Mammary epithelial cell (primary cell): ENCODE measurements at regions of chr7 and their contacts with region 1.

Region 1: DNA sequence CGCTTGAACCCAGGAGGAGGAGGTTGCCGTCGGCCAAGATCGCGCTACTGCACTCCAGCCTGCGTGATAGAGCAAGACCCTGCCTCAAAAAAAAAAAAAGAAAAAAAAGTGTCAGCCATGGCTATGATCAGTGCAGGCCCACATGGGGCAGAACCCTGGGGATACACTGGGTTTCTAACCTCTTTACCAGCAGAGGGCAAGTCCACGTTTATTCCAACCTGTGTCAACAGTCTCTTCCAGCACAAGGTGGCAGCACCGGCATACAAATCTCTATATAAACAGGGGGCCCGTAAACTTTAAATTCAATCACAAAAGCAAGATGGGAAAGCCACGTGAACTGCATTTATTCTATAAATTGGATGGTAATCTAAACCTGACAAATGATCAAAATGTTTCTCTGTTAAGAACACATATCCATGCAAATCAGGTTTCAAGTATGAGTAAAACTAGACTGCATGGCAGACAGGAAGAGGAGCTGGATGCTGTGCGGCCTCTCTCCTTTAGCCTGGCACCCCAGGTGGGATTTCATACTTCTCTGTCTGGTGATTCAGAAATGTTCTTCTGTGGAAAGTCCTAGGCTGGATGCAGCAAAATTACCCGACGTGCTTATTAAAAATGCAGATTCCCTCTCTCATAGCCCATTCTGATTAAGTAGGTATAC is 60.0 kb upstream of the STEAP1B start:
- DNase-seq: peak; percentile 61
- H3K4me3 ChIP-seq: no peak overlapping the region
- H3K27ac ChIP-seq: no peak overlapping the region
- H3K4me1 ChIP-seq: peaks cover 45% of the 10 kb centered on the region
- H3K27me3 ChIP-seq: no peaks in the 10 kb centered on the region
- CTCF ChIP-seq: peak; percentile 93

Region 2: DNA sequence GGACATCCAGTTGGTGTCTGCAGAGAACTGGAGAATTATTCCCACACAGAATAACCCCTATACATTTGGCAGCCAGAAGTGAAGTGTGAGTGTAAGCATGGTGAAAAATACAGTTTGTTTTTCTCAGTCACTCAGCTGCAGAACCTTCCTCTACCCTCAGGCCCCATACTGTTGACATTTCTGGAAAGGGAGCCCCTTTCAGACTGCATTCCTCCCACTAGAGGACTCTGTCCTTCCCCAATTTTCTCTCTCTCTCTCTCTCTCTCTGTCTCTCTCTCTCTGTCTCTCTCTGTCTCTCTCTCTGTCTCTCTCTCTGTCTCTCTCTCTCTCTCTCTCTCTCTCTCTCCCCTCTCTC is 26.8 kb after region 1 on chr7:
- CTCF ChIA-PET with region 1: no interaction called
- dilution Hi-C with region 1: no loop called
- in situ Hi-C with region 1: no loop called
- intact Hi-C with region 1: loop called (anchors 2 kb)
- DNase-seq: peak; percentile 34
- H3K4me3 ChIP-seq: no peak overlapping the region
- H3K27ac ChIP-seq: no peak overlapping the region
- H3K4me1 ChIP-seq: peaks cover 33% of the 10 kb centered on the region
- H3K27me3 ChIP-seq: no peaks in the 10 kb centered on the region
- CTCF ChIP-seq: peak; percentile 32 to 59

Region 3: GRCh38 chr7:22660732-22661131 is 100.8 kb after region 1 on chr7:
- CTCF ChIA-PET with region 1: no interaction called
- dilution Hi-C with region 1: no loop called
- in situ Hi-C with region 1: no loop called
- intact Hi-C with region 1: loop called (anchors 2 kb)
- DNase-seq: no peak
- H3K4me3 ChIP-seq: no peak overlapping the region
- H3K27ac ChIP-seq: no peak overlapping the region
- H3K4me1 ChIP-seq: peaks cover 1% of the 10 kb centered on the region
- H3K27me3 ChIP-seq: no peaks in the 10 kb centered on the region
- CTCF ChIP-seq: peak in 1 of 2 donors; percentile 24

Region 4: GRCh38 chr7:22718200-22718711 is 158.3 kb after region 1 on chr7:
- CTCF ChIA-PET with region 1: no interaction called
- dilution Hi-C with region 1: loop called (anchors 5 kb)
- in situ Hi-C with region 1: no loop called
- intact Hi-C with region 1: no loop called
- DNase-seq: peak; percentile 83
- H3K4me3 ChIP-seq: no peak overlapping the region
- H3K27ac ChIP-seq: no peak overlapping the region
- H3K4me1 ChIP-seq: peaks cover 17% of the 10 kb centered on the region
- H3K27me3 ChIP-seq: no peaks in the 10 kb centered on the region
- CTCF ChIP-seq: no peak

Region 5: GRCh38 chr7:22732556-22733126 is 172.7 kb after region 1 on chr7:
- CTCF ChIA-PET with region 1: interaction called, 25 read pairs
- dilution Hi-C with region 1: no loop called
- in situ Hi-C with region 1: loop called (anchors 5 kb)
- intact Hi-C with region 1: loop called (anchors 1 kb)
- DNase-seq: peak; percentile 60
- H3K4me3 ChIP-seq: no peak overlapping the region
- H3K27ac ChIP-seq: no peak overlapping the region
- H3K4me1 ChIP-seq: peaks cover 22% of the 10 kb centered on the region
- H3K27me3 ChIP-seq: no peaks in the 10 kb centered on the region
- CTCF ChIP-seq: peak; percentile 76 to 85

Region 6: DNA sequence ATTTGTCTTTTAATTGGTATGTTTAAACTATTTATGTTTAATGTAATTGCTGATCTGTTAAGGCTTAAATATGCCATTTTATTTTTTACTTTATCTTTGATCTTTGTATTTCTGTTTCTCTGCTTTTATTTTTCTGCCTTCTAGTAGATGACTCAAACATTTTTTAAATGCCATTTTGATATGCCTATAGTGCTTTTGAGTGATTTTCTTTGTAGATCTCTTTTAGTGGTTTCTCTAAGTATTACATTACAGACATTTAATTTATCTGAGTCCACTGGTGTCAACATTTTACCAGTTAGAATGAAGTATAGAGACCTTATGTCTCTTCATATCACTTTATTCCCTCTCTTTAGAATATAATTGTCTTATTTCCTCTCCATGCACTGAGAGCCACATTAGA is 199.8 kb after region 1 on chr7:
- CTCF ChIA-PET with region 1: no interaction called
- dilution Hi-C with region 1: no loop called
- in situ Hi-C with region 1: no loop called
- intact Hi-C with region 1: no loop called
- DNase-seq: no peak
- H3K4me3 ChIP-seq: no peak overlapping the region
- H3K27ac ChIP-seq: no peak overlapping the region
- H3K4me1 ChIP-seq: no peaks in the 10 kb centered on the region
- H3K27me3 ChIP-seq: no peaks in the 10 kb centered on the region
- CTCF ChIP-seq: no peak

Region 7: GRCh38 chr7:22860784-22861482 is 301.0 kb after region 1 on chr7:
- CTCF ChIA-PET with region 1: no interaction called
- dilution Hi-C with region 1: no loop called
- in situ Hi-C with region 1: no loop called
- intact Hi-C with region 1: loop called (anchors 2 kb)
- DNase-seq: peak; percentile 22
- H3K4me3 ChIP-seq: no peak overlapping the region
- H3K27ac ChIP-seq: peak overlapping the region; percentile 99
- H3K4me1 ChIP-seq: peaks cover 53% of the 10 kb centered on the region
- H3K27me3 ChIP-seq: no peaks in the 10 kb centered on the region
- CTCF ChIP-seq: peak; percentile 51 to 62

Region 8: GRCh38 chr7:23062452-23062851 is 502.5 kb after region 1 on chr7:
- CTCF ChIA-PET with region 1: no interaction called
- dilution Hi-C with region 1: no loop called
- in situ Hi-C with region 1: loop called (anchors 10 kb)
- intact Hi-C with region 1: no loop called
- DNase-seq: peak; percentile 97
- H3K4me3 ChIP-seq: no peak overlapping the region
- H3K27ac ChIP-seq: peak overlapping the region; percentile 66
- H3K4me1 ChIP-seq: peaks cover 20% of the 10 kb centered on the region
- H3K27me3 ChIP-seq: no peaks in the 10 kb centered on the region
- CTCF ChIP-seq: no peak